SK-N-SH (cell line): ENCODE measurements at regions of chr19 and their contacts with region 1.

Region 1: GRCh38 chr19:43934985-43935708 is at the start of gene ZNF45:
- DNase-seq: peak; percentile 88
- H3K4me3 ChIP-seq: peak within 1 kb of the TSS; percentile 88 to 93
- H3K27ac ChIP-seq: peak within 1 kb of the TSS; percentile 88 to 90
- H3K4me1 ChIP-seq: no peaks in the 10 kb centered on the region; a peak in 3 of 4 replicates
- H3K27me3 ChIP-seq: no peaks in the 10 kb centered on the region
- CTCF ChIP-seq: no peak
- EP300 ChIP-seq: no peak
- RAD21 ChIP-seq: no peak
- polyA plus RNA-seq, gene ZNF45: 9.7 and 14.3 TPM in 2 replicates

Region 2: DNA sequence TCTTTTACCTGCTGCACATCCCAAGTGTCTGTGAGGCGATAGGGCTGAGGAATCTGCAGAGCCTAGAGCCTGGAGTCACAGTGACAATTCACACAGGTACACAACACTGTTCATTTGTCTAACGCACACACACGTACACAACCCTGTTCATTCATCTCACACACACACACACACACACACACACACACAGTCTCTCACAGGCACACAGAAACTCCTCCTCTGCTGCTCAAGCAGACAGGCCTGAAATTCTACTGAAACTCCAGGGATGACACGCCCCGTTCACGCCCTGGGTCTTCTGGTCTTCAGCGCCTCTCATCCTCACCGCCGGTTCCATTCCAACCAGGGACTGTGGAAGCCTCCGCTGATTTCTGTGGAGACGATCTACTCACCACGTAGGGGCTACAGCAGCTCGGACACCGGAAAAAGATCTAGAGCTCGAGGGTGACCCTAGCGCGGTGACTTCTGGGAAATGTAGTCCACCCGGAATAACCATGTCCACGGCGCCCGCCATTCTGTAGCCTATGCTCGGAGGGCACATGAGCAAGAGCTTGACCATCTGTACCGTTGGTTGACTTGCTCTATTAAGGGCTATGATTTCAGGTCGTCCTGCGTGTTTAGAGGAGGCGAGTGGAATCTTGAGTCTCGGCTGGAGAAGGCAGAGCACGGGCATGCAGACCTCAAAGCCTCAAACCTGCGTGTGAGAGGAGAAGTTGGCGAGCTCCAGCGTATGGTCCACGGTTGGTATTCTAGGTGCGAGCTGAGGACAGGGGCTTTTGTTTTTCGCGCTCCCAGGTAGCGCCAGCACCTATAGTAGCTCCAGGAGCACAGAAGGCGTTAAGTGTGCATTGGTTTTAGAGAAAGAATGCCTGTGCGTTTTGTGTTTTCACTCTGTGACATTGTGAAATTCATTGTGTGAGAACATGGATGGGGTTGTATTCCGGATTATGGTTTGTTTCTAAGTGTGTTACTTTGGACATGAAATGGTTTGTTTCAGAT is 33.5 kb before region 1 on chr19:
- CTCF ChIA-PET with region 1: no interaction called
- POLR2A ChIA-PET with region 1: interaction called, 17 read pairs
- DNase-seq: peak; percentile 78
- H3K4me3 ChIP-seq: peak overlapping the region; percentile 60 to 70
- H3K27ac ChIP-seq: no peak overlapping the region
- H3K4me1 ChIP-seq: peaks cover 0 to 6% of the 10 kb centered on the region in 2 experiments; a peak in 1 of 4 replicates
- H3K27me3 ChIP-seq: no peaks in the 10 kb centered on the region
- CTCF ChIP-seq: no peak
- EP300 ChIP-seq: no peak
- RAD21 ChIP-seq: no peak

Region 3: GRCh38 chr19:43950834-43951645 is 15.9 kb after region 1 on chr19 and contains the start of gene ZNF221:
- CTCF ChIA-PET with region 1: interaction called, 3 read pairs
- POLR2A ChIA-PET with region 1: interaction called, 33 read pairs
- DNase-seq: peak; percentile 87
- H3K4me3 ChIP-seq: peak within 1 kb of the TSS; percentile 89 to 93
- H3K27ac ChIP-seq: peak within 1 kb of the TSS; percentile 30 to 85; a peak in 3 of 4 replicates
- H3K4me1 ChIP-seq: no peaks in the 10 kb centered on the region
- H3K27me3 ChIP-seq: no peaks in the 10 kb centered on the region
- CTCF ChIP-seq: peak; percentile 43
- EP300 ChIP-seq: no peak
- RAD21 ChIP-seq: peak; percentile 35; the same call in 1 of the 2 replicates
- polyA plus RNA-seq, gene ZNF221: 0.64 and 1.7 TPM in 2 replicates

Region 4: GRCh38 chr19:44025217-44025936 is 90.2 kb after region 1 on chr19 and contains the start of gene ZNF222:
- CTCF ChIA-PET with region 1: no interaction called
- POLR2A ChIA-PET with region 1: no interaction called
- DNase-seq: peak; percentile 75
- H3K4me3 ChIP-seq: peak within 1 kb of the TSS; percentile 97 to 98
- H3K27ac ChIP-seq: peak within 1 kb of the TSS; percentile 58 to 79
- H3K4me1 ChIP-seq: peaks cover 0 to 9% of the 10 kb centered on the region in 2 experiments; a peak in 2 of 4 replicates
- H3K27me3 ChIP-seq: no peaks in the 10 kb centered on the region
- CTCF ChIP-seq: no peak
- EP300 ChIP-seq: no peak
- RAD21 ChIP-seq: no peak
- polyA plus RNA-seq, gene ZNF222: 3.7 and 6.7 TPM in 2 replicates